GM13977 (cell line): ENCODE measurements at regions of chr2 and their contacts with region 1.

Region 1: GRCh38 chr2:62415019-62415431 is 91.0 kb downstream of the TMEM17 start:
- DNase-seq: peak; percentile 58
- CTCF ChIP-seq: no peak

Region 2: DNA sequence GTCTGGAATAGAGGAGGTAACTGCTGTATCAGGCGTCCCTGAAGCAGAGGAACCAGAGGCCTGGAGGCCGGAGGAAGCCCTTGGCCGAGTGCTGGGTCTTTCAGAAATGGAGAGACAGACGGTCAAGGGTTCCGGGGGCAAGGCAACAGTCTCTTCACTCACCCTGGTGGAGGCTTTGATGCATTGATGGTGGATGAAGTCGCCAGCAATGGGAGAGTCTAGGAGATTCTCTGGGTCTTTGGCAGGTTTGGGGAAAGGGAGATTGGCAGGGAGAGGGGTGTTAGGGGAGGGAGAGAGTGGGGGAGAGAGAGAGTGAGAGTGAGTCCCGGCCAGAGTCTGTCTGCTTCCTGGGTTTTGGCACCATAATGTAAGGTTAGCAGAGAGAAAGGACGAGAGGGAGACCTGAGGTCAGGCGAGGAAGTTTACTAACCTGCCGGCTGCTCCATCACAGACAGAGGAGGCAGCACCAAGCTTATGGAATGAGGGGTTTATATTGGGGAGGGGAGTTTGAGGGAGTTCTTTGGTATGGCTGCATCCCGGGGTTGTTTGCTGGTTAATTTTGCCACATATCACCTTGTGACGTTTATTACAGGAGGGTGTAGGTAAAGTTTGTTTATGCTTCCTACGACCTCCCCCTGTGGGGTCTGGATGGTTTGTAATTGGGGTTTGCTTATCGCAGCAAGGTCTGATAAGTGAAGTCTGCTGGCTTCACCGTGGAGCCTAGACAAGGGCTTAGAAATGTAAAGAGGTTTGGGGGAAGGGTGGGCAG is 489.9 kb before region 1 on chr2:
- in situ Hi-C with region 1: loop called (anchors 5 kb)
- DNase-seq: no peak
- CTCF ChIP-seq: no peak

Region 3: DNA sequence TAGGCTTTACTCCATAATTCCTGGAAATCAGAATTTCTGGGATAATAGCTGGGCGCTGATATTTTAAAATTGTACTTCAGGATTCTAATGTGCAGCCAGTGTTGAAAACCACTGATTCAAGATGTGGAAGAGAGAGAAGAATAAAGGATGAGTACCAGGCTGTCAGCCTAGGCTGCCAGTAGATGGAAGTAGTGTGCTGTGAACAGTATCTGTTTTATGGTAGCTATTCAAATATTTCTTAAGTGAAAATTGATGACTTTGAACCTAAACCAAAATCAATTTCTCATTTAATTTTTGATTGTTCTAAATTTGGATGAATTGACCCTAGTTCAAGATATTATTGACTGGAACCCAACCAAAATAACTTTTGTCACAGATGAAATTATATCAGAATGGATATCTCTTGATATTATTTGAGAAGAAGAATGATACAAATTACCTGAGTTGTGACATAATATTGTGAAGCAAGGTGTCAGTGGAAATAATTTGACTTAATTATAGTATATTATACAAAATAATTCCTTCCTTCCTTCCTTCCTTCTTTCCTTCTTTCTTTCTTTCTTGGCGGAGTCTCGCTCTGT is 421.5 kb before region 1 on chr2:
- in situ Hi-C with region 1: loop called (anchors 10 kb)
- DNase-seq: peak; percentile 49
- CTCF ChIP-seq: peak; percentile 92

Region 4: GRCh38 chr2:62216616-62217015 is 198.4 kb before region 1 on chr2:
- in situ Hi-C with region 1: loop called (anchors 25 kb)
- DNase-seq: no peak
- CTCF ChIP-seq: no peak